PC-3 (cell line): ENCODE measurements at regions of chr2 and their contacts with region 1.

Region 1: DNA sequence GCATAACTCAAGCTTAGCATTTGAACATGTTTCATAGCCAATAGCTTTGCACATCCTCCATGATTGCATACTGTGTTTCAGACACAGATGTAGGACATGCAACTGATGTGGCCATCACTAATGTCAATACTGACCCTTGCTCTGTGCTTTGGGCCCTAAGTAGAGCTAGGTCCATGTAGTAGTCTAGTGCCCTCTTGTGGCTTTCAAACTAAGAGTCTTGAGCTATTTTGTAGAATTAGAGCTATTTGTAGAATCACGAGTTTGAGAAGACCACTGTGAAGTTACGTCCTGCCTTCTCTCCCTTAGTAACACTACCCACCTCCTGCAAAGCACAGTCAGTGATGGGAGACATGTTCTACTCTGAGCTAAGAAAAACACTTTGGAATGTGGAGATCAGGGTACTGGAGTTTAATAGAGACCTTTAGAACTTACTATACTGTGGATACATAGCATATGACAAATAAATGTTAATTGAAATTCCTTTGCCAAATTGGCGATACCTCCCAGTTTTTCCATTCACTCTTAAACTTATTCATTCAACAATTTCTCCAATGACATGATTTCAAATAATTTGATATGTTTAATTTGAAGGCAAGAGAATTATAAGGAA is 306.5 kb upstream of the TNP1 start:
- DNase-seq: peak; percentile 65
- ATAC-seq: no peak; the same call in 1 of the 2 replicates
- H3K4me3 ChIP-seq: no peak overlapping the region
- H3K27ac ChIP-seq: no peak overlapping the region
- H3K4me1 ChIP-seq: peaks cover 27% of the 10 kb centered on the region
- H3K27me3 ChIP-seq: no peaks in the 10 kb centered on the region
- CTCF ChIP-seq: peak; percentile 79

Region 2: GRCh38 chr2:217016796-217017419 is 149.4 kb before region 1 on chr2:
- CTCF ChIA-PET with region 1: no interaction called
- POLR2A ChIA-PET with region 1: no interaction called
- intact Hi-C with region 1: no loop called
- DNase-seq: no peak
- ATAC-seq: no peak
- H3K4me3 ChIP-seq: no peak overlapping the region
- H3K27ac ChIP-seq: no peak overlapping the region
- H3K4me1 ChIP-seq: no peaks in the 10 kb centered on the region
- H3K27me3 ChIP-seq: no peaks in the 10 kb centered on the region
- CTCF ChIP-seq: no peak

Region 3: DNA sequence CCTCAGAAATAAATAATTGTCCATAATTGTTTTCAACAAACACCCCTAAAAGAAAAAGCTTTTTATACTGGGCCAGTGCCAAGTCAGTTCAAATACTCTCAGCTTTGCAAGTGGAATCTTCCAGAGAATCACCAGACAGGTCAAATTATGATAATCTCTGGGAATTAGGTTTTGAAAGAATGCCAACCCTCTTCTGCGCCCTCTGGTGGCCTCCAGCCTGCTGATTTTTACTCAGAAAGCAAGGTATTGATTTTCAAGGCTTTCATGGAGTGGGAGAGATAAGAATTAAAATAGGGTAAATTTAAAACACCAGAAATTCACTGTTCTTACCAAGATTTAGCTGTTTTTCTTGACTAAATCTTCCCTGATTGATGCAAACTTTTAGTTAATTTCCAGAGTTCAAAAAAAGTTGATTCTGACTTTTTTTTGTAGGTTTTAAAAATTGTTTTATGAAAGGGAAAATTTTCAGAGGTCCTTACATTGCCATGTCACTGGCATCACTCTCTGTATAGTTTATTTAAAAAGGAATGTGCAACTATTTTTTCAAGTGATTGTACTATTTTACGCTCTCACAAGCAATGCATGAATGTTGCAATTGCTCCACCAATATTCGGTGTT is 23.6 kb before region 1 on chr2:
- CTCF ChIA-PET with region 1: no interaction called
- POLR2A ChIA-PET with region 1: no interaction called
- intact Hi-C with region 1: no loop called
- DNase-seq: peak; percentile 65
- ATAC-seq: no peak
- H3K4me3 ChIP-seq: no peak overlapping the region
- H3K27ac ChIP-seq: no peak overlapping the region
- H3K4me1 ChIP-seq: no peaks in the 10 kb centered on the region
- H3K27me3 ChIP-seq: no peaks in the 10 kb centered on the region
- CTCF ChIP-seq: peak; percentile 92

Region 4: GRCh38 chr2:217277646-217278398 is 111.5 kb after region 1 on chr2:
- CTCF ChIA-PET with region 1: no interaction called
- POLR2A ChIA-PET with region 1: interaction called, 8 read pairs
- intact Hi-C with region 1: loop called (anchors 5 kb)
- DNase-seq: peak; percentile 96
- ATAC-seq: peak; percentile 72
- H3K4me3 ChIP-seq: no peak overlapping the region
- H3K27ac ChIP-seq: peak overlapping the region; percentile 94
- H3K4me1 ChIP-seq: peaks cover 50% of the 10 kb centered on the region
- H3K27me3 ChIP-seq: no peaks in the 10 kb centered on the region
- CTCF ChIP-seq: no peak

Region 5: GRCh38 chr2:217367464-217367863 is 201.1 kb after region 1 on chr2:
- CTCF ChIA-PET with region 1: no interaction called
- POLR2A ChIA-PET with region 1: no interaction called
- intact Hi-C with region 1: loop called (anchors 2 kb)
- DNase-seq: peak; percentile 90
- ATAC-seq: peak; percentile 79
- H3K4me3 ChIP-seq: no peak overlapping the region
- H3K27ac ChIP-seq: peak overlapping the region; percentile 94
- H3K4me1 ChIP-seq: peaks cover 62% of the 10 kb centered on the region
- H3K27me3 ChIP-seq: no peaks in the 10 kb centered on the region
- CTCF ChIP-seq: no peak

Region 6: GRCh38 chr2:217440000-217440399 is 273.7 kb after region 1 on chr2:
- CTCF ChIA-PET with region 1: no interaction called
- POLR2A ChIA-PET with region 1: no interaction called
- intact Hi-C with region 1: loop called (anchors 5 kb)
- DNase-seq: no peak
- ATAC-seq: no peak
- H3K4me3 ChIP-seq: no peak overlapping the region
- H3K27ac ChIP-seq: no peak overlapping the region
- H3K4me1 ChIP-seq: peaks cover 14% of the 10 kb centered on the region
- H3K27me3 ChIP-seq: no peaks in the 10 kb centered on the region
- CTCF ChIP-seq: no peak